ENCODE measurements at regions of chr22 and their contacts with region 1.

Region 1: GRCh38 chr22:30763815-30764686 is 69.4 kb downstream of the OSBP2 start:
- DNase-seq: no peak
- ATAC-seq: peak; percentile 73

Region 2: DNA sequence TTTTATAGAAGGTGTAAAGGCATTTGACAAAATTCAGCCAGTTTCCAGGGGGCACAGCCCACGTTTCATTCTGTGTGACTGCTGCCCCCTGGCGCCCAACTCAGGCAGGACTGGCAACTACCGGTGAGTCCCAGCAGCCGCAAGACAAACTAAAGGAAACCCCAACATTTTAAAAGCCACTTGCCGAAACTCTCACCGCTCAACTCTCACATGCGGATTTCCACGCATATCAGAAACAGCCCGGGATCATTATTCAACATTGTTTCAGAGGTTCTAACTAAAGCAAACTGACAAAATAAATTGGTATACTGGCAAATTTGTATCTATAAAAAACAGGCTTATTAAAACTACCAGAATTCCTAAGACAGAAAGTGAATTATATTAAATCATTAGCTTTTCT is 156.4 kb after region 1 on chr22:
- intact Hi-C with region 1: loop called (anchors 5 kb)
- DNase-seq: peak; percentile 91
- ATAC-seq: peak; percentile 70

Region 3: GRCh38 chr22:31148953-31149627 is 385.0 kb after region 1 on chr22:
- intact Hi-C with region 1: loop called (anchors 10 kb)
- DNase-seq: peak; percentile 73
- ATAC-seq: peak; percentile 97